ENCODE measurements at regions of chr13 and their contacts with region 1.

Region 1: DNA sequence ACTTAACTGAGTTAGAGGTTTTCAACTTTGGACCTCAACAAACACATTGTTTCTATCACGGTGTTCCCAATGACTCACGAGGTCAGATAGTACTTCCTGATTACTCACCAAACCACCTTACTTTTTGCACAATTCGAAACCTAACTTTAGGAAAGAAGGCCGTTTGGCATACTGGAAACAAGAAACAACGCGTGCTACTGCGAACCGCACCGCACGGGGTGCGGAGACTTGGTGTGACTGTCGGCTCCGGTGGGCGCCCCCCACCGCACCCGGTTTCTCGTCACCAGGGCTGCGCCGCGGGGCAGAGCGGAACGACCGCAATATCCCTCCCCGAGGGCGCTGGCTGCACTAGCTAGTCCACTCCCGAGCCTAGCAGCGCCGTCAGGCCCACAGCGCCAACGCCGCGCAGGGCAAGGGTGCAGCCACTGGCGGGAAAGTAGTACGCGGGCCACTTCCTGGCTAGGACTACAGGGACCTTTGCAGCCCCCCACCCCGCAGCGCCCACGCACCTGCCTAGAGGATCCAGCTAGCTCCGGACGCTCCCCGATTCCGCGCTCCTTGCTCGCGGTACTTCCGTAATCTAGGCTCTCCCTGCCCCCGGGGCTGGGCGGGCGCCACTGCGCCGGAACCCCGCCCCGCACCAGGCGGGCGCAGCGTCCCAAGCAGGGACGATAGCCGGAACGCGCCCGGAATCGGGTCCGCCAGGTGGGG is at the start of gene PARP4:
- DNase-seq: peak; percentile 66
- H3K4me3 Mint-ChIP-seq: peak within 1 kb of the TSS; percentile 87
- H3K27ac Mint-ChIP-seq: peak within 1 kb of the TSS; percentile 98
- H3K4me1 Mint-ChIP-seq: peaks cover 50% of the 10 kb centered on the region
- H3K27me3 Mint-ChIP-seq: peaks cover 2% of the 10 kb centered on the region
- total RNA-seq, gene PARP4: 41.3 and 41.9 TPM in 2 replicates

Region 2: DNA sequence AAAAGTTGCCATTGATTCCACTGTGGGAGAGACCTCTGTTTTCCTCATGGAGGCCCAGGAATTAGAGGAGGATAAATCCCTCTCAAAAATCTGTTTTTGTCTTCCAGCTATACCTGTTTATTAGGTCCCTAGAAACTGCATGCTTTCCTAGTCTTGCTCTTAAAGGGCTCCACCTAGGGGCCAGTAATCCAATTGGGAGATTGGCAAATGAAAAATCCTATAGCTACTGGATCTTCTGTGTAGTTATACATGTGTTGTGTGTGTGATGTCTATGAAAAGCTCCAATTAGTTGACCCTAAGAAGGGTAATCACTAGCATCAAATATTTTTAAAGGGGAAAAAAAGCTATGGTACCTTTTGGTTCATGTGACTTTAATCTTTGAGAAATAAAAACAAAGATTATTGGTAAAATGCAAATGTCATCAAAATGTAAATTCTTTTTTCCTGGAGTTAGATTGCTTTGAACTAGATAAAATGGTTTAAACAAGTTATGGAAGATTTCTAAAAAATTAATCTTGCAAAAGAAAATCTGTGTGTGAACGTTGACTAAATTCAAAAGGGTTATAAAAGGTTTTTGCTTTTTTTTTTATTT is 551.7 kb before region 1 on chr13:
- intact Hi-C with region 1: loop called (anchors 5 kb)
- DNase-seq: no peak
- H3K4me3 Mint-ChIP-seq: no peak overlapping the region
- H3K27ac Mint-ChIP-seq: no peak overlapping the region
- H3K4me1 Mint-ChIP-seq: peaks cover 59% of the 10 kb centered on the region
- H3K27me3 Mint-ChIP-seq: peaks cover 7% of the 10 kb centered on the region

Region 3: GRCh38 chr13:24228852-24229458 is 283.4 kb before region 1 on chr13:
- intact Hi-C with region 1: loop called (anchors 5 kb)
- DNase-seq: no peak
- H3K4me3 Mint-ChIP-seq: no peak overlapping the region
- H3K27ac Mint-ChIP-seq: peak overlapping the region; percentile 40
- H3K4me1 Mint-ChIP-seq: peaks cover 56% of the 10 kb centered on the region
- H3K27me3 Mint-ChIP-seq: no peaks in the 10 kb centered on the region

Region 4: GRCh38 chr13:24459234-24459633 is 53.1 kb before region 1 on chr13:
- intact Hi-C with region 1: loop called (anchors 1 kb)
- DNase-seq: no peak
- H3K4me3 Mint-ChIP-seq: no peak overlapping the region
- H3K27ac Mint-ChIP-seq: peak overlapping the region; percentile 50
- H3K4me1 Mint-ChIP-seq: peaks cover 37% of the 10 kb centered on the region
- H3K27me3 Mint-ChIP-seq: no peaks in the 10 kb centered on the region

Region 5: DNA sequence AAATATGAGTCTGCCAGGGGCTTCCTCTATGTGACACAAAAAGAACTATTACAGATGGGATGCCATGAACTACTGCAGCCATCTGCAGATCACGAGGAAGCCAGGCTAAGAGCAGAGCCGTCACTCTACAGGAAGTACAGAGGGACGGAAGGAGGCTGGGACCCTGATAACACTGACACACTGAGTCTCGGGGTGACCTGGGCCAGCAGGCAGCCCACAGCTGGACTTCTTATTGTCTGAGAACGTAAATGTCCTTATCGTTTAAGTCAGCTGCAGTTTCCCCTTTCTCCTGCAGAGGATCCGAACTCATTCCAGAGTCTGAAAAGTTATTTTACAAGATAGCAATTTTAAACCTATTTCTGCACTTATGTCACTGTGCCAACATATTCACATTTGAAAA is 20.5 kb before region 1 on chr13:
- intact Hi-C with region 1: no loop called
- DNase-seq: no peak
- H3K4me3 Mint-ChIP-seq: no peak overlapping the region
- H3K27ac Mint-ChIP-seq: no peak overlapping the region
- H3K4me1 Mint-ChIP-seq: no peaks in the 10 kb centered on the region
- H3K27me3 Mint-ChIP-seq: no peaks in the 10 kb centered on the region

Region 6: DNA sequence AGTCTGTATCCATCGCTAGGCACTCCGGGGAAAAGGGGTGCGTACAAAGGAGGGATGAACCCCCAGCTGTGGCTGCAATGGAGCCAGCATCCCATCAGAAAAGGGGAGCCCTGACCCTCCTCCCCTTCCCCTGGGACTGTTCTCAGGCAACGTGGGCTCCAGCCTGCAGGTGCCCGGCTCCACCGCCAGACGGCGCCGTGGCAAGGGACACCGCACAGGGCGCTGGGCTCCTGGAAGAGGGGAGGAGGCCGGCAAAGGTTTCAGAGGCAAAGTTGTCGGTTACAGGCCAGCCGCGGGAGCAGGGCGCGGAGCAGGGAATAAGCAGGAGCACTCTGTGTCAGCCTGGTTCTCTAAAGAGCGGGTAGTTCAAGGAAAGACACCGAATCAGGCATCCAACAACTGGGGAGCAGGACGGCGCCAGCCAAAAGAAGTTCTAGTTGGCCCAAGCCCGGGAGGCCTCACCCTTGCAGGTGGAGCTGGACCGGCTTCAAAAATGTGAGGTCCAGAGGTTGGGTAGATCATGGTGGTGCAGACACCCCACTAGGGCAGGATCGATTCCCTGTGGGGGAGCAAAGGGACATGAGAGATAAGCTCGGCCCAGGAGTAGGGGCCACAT is 114.9 kb after region 1 on chr13:
- intact Hi-C with region 1: loop called (anchors 5 kb)
- DNase-seq: no peak
- H3K4me3 Mint-ChIP-seq: no peak overlapping the region
- H3K27ac Mint-ChIP-seq: no peak overlapping the region
- H3K4me1 Mint-ChIP-seq: peaks cover 42% of the 10 kb centered on the region
- H3K27me3 Mint-ChIP-seq: no peaks in the 10 kb centered on the region

Region 7: GRCh38 chr13:24922745-24923591 is 410.6 kb after region 1 on chr13:
- intact Hi-C with region 1: loop called (anchors 1 kb)
- DNase-seq: peak; percentile 95
- H3K4me3 Mint-ChIP-seq: peak overlapping the region; percentile 95
- H3K27ac Mint-ChIP-seq: peak overlapping the region; percentile 92
- H3K4me1 Mint-ChIP-seq: peaks cover 14% of the 10 kb centered on the region
- H3K27me3 Mint-ChIP-seq: peaks cover 2% of the 10 kb centered on the region

Region 8: DNA sequence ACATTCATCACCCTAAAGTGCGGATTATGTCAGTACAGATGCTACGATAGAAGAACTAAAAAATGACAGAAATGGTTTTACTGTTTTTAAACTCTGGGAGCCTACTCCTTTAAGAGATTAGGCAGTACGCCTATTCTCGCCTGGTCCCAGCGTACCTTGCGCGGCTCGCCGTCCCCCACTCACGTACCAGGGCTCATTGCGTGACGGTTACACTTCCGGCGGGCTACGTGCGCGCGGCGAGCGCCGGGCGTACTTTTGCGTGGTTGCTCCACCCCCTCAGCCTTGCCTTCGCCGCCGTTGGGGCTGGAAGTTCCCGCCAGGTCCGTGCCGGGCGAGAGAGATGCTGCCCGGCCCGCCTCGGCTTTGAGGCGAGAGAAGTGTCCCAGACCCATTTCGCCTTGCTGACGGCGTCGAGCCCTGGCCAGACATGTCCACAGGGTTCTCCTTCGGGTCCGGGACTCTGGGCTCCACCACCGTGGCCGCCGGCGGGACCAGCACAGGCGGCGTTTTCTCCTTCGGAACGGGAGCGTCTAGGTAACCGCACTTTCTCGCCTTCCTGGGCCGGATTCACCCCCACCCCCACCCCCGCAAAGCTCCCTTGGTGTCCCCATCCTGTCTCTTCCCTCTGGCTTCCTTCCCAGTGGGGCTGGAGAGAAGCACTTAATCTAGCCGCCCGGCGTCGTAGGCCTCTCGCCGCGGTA is 789.1 kb after region 1 on chr13 and contains the start of gene NUP58:
- intact Hi-C with region 1: loop called (anchors 5 kb)
- DNase-seq: peak; percentile 94
- H3K4me3 Mint-ChIP-seq: peak within 1 kb of the TSS; percentile 96
- H3K27ac Mint-ChIP-seq: peak within 1 kb of the TSS; percentile 94
- H3K4me1 Mint-ChIP-seq: peaks cover 35% of the 10 kb centered on the region
- H3K27me3 Mint-ChIP-seq: peaks cover 5% of the 10 kb centered on the region
- total RNA-seq, gene NUP58: 131 and 142 TPM in 2 replicates